Heart left ventricle (tissue), 16 donors: ENCODE measurements at regions of chr1 and their contacts with region 1.

Region 1: GRCh38 chr1:173824331-173825081 is at the starts of genes CENPL and DARS2:
- DNase-seq: peak; percentile 96 to 99 (median 96)
- ATAC-seq: peak; percentile 98 to 99 (median 99)
- H3K4me3 ChIP-seq: peak within 1 kb of the TSS; percentile 58 to 98 (median 78)
- H3K27ac ChIP-seq: peak within 1 kb of the TSS; percentile 87 to 97 (median 93)
- H3K4me1 ChIP-seq: peaks cover 0 to 29% (median 8%) of the 10 kb centered on the region in 12 donors
- H3K27me3 ChIP-seq: no peaks in the 10 kb centered on the region
- CTCF ChIP-seq: no peak
- POLR2A ChIP-seq: peak in 1 of 2 donors; percentile 21
- total RNA-seq, gene CENPL: 1.7 to 5.8 (median 3.5) TPM
- total RNA-seq, gene DARS2: 10.9 to 25.1 (median 15.9) TPM

Region 2: GRCh38 chr1:173476664-173477285 is 347.7 kb before region 1 on chr1:
- intact Hi-C with region 1: loop called in 3 of 10 experiments (anchors 1 to 5 kb)
- DNase-seq: peak; percentile 92 to 97 (median 94)
- ATAC-seq: peak; percentile 88 to 92 (median 91)
- H3K4me3 ChIP-seq: peak overlapping the region; percentile 52 to 96 (median 79)
- H3K27ac ChIP-seq: peak overlapping the region; percentile 66 to 99 (median 96)
- H3K4me1 ChIP-seq: peaks cover 0 to 61% (median 50%) of the 10 kb centered on the region in 12 donors
- H3K27me3 ChIP-seq: no peaks in the 10 kb centered on the region
- CTCF ChIP-seq: peak in 4 of 12 donors; percentile 15 to 32 (median 24)
- POLR2A ChIP-seq: peak in 1 of 2 donors; percentile 30

Region 3: DNA sequence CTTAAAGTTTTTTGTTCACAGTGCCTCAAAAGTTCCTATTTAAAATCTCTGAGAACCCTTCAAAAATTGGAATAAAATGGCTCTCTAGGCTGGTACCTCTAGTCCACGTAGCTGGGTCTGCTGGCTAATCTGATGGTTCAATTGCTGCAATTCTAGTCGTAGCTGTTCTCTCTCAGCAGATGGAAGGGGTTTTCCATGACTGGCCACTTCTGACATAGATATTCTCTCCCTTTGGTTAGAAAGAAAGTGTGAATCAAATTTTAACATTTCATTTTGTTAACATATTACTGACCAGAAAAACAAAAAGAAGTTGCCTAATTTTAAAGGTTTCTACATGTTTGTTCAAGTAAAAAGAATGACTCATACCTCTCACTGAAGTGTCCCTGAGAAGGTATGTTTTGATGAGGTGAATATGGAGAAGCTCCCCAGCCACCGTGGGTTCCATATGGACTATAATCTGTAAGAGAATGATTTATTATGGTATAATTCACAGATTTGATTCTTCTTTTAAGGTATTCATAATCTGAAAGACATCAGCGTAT is 121.9 kb after region 1 on chr1:
- intact Hi-C with region 1: no loop called
- DNase-seq: no peak
- ATAC-seq: no peak
- H3K4me3 ChIP-seq: no peak overlapping the region
- H3K27ac ChIP-seq: no peak overlapping the region
- H3K4me1 ChIP-seq: no peaks in the 10 kb centered on the region
- H3K27me3 ChIP-seq: no peaks in the 10 kb centered on the region
- CTCF ChIP-seq: no peak
- POLR2A ChIP-seq: no peak